ENCODE measurements at regions of chr3 and their contacts with region 1.

Region 1: GRCh38 chr3:183635431-183636220 is at the start of gene KLHL24:
- DNase-seq: peak; percentile 93 to 96
- H3K4me3 ChIP-seq: peak within 1 kb of the TSS; percentile 77 to 100 (median 98)
- H3K27ac ChIP-seq: peak within 1 kb of the TSS; percentile 99 to 100 (median 100)
- H3K4me1 ChIP-seq: peaks cover 20 to 26% of the 10 kb centered on the region in 2 donors
- H3K27me3 ChIP-seq: no peaks in the 10 kb centered on the region
- CTCF ChIP-seq: no peak
- POLR2A ChIP-seq: peak; percentile 99 to 100
- total RNA-seq, gene KLHL24: 163 to 320 (median 214) TPM

Region 2: GRCh38 chr3:183697610-183698317 is 62.1 kb after region 1 on chr3 and contains the start of gene YEATS2:
- intact Hi-C with region 1: loop called (anchors 5 kb)
- DNase-seq: peak; percentile 58 to 60
- H3K4me3 ChIP-seq: peak within 1 kb of the TSS; percentile 50 to 88 (median 81)
- H3K27ac ChIP-seq: peak within 1 kb of the TSS; percentile 92 to 97 (median 95)
- H3K4me1 ChIP-seq: peaks cover 4 to 26% of the 10 kb centered on the region in 2 donors
- H3K27me3 ChIP-seq: no peaks in the 10 kb centered on the region
- CTCF ChIP-seq: no peak
- POLR2A ChIP-seq: peak in 1 of 2 donors; percentile 87
- total RNA-seq, gene YEATS2: 30.0 to 42.5 (median 37.7) TPM

Region 3: GRCh38 chr3:183895296-183895695 is 259.7 kb after region 1 on chr3:
- intact Hi-C with region 1: no loop called
- DNase-seq: peak; percentile 20 to 23
- H3K4me3 ChIP-seq: no peak overlapping the region
- H3K27ac ChIP-seq: no peak overlapping the region
- H3K4me1 ChIP-seq: no peaks in the 10 kb centered on the region
- H3K27me3 ChIP-seq: no peaks in the 10 kb centered on the region
- CTCF ChIP-seq: peak; percentile 41 to 93 (median 75)
- POLR2A ChIP-seq: no peak

Measured in thyroid gland (tissue), 4 donors.